ENCODE measurements at regions of chr6 and their contacts with region 1.

Region 1: DNA sequence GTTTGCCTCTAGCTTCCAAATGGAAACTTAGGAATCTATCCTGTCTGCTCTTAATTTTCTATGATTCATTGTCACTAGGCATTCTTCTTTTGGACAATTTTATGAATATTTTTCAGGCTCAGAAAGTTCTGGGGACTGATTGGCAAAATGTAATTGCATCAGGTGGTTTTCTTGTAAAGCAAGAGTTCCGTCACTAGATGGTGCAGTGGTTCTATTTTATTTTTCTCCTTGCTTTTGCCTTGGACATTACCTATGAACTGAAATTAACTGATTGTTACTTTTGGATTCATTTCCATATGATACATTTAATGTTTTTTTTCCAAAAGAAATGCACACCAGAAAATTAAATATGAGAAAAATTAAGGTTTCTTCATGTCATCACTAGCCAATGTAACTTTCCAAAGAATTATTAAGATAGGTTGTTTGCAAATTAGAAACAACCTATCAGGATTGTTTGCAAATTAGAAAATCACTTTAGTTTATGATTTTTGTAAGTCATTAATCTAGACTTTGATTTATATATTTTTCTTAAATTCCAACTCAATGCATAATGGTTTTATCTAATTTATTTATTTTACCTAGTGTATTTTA is 48.0 kb downstream of the TMEM170B start:
- DNase-seq: no peak
- H3K4me3 ChIP-seq: no peak overlapping the region
- CTCF ChIP-seq: no peak
- POLR2A ChIP-seq: no peak

Region 2: DNA sequence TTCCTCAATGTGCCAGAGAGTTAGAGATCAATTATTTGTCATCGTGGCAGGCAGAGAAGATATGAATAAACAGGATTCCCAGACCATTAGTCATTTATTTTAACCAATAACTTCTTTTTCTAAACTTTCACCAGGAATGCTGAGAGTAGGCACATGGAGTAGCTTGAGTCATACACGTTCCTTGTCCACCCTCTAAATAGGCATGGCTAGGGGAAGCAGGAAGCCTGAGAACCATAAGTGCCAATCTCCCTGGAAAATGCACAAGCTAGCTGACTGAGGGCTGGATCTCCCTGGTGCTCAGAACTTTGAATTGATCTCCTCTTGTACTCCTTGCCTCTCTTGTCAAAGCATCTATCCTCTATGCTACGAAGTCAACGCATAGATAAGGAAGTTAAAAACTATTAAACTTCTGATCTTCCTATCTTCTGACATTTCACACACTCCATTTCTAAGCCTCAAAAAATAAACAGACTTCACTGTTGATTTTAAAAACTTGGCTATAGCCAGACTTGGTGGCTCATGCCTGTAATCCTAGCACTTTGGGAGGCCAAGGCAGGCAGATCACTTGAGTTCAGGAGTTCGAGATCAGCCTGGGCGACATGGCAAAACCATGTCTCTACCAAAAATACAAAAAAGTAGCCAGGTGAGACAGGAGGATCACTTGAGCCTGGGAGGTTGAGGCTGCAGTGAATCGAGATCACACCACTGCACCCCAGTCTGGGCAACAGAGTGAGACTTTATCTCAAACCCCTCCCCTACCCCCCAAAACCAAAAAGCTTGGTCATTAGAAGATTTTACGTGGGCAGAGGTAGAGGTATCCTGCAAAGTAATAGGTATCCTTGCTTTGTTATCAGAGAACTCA is 181.3 kb after region 1 on chr6:
- intact Hi-C with region 1: no loop called
- DNase-seq: no peak
- H3K4me3 ChIP-seq: no peak overlapping the region
- CTCF ChIP-seq: no peak
- POLR2A ChIP-seq: no peak

Region 3: GRCh38 chr6:12289933-12290820 is 704.7 kb after region 1 on chr6 and contains the start of gene EDN1:
- intact Hi-C with region 1: loop called (anchors 5 kb)
- DNase-seq: peak; percentile 73 to 94
- H3K4me3 ChIP-seq: peak within 1 kb of the TSS; percentile 10
- CTCF ChIP-seq: no peak
- POLR2A ChIP-seq: no peak
- total RNA-seq, gene EDN1: 11.1 to 42.6 (median 15.5) TPM

Measured in lower leg skin (tissue), 4 donors.